Activated T-helper 2 cell treated with anti-CD3 and anti-CD28 coated beads, Interferon-gamma antibody, Interleukin-2, Interleukin-4, amounts not matched to agents 10 μg/mL and 5 μg/mL and 100 μg/mL, durations not matched to agents 14 hours and 24 hours and 36 hours (primary cell): ENCODE measurements at regions of chrX and their contacts with region 1.

Region 1: DNA sequence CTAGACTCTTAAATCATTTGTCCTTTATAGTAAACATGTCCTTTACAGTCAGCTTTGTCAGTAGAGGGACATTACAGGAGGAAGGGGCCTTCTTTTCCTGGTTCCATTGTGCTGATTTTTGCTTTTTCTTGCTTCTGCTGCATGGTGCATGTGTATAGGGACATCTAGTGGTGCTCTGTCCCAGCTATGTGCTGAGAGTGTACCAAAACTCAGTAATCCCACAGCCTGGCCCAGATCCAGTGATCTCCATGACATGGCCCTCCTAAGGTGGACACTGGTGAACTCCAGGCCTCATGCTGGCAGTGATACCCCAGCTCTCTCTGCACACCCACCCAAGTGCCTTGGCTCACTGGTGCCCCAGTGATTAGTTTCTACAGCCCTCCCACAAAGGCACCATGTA is 45.2 kb downstream of the MAGEB17 start:
- DNase-seq: no peak
- H3K4me3 Mint-ChIP-seq: no peak overlapping the region
- H3K27ac Mint-ChIP-seq: no peak overlapping the region
- H3K4me1 Mint-ChIP-seq: no peaks in the 10 kb centered on the region
- H3K27me3 Mint-ChIP-seq: no peaks in the 10 kb centered on the region

Region 2: DNA sequence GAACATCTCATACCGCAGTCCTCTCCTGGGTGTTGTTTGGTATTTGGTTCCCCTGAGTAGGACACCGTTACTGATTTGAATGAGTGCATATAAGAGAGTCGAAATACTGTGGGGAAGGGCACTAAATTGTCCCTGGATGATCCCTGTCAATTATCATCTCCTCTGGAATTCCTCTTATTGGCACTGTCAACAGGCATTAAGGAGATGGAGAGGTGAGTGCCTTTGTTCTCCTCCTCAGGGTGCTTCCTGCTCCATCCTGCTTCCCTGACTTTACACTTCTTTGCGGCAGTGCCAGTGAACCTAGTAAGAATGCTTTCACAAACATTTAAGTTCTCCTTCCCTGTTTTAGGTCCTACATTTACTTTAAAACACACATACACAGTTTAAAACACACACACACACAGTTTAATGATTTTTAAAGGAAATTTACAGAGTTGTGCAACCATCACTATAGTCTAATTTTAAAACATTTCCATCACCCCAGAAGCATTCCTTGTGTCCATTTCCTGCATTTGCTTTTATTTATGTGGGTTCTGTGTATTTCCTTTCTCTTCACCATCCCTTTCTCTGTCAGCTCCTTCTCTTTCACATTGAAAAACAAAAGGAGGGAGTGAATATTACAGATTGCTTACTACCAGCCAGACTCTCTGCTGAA is 443.0 kb before region 1 on chrX:
- intact Hi-C with region 1: loop called (anchors 5 kb)
- DNase-seq: no peak
- H3K4me3 Mint-ChIP-seq: no peak overlapping the region
- H3K27ac Mint-ChIP-seq: no peak overlapping the region
- H3K4me1 Mint-ChIP-seq: peaks cover 8% of the 10 kb centered on the region
- H3K27me3 Mint-ChIP-seq: no peaks in the 10 kb centered on the region

Region 3: DNA sequence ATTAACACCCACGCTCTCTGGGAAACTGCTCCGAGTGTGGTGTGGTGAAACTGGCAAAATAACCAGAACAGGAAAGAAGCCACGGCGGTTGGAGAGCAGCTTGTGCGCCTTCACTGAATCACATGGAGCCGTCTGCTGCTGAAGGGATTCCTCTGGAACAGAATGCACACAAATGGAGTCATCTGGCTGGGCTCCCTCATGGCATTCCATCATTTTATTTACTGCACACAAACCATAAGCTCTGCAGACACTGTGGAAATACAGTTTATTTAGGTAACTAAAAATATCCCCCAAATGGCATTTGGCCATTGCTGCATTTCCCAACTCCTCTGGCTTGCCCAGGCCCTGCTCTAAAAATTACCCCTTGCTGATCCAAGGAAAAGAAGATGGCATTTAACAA is 250.5 kb after region 1 on chrX:
- intact Hi-C with region 1: no loop called
- DNase-seq: no peak
- H3K4me3 Mint-ChIP-seq: no peak overlapping the region
- H3K27ac Mint-ChIP-seq: no peak overlapping the region
- H3K4me1 Mint-ChIP-seq: no peaks in the 10 kb centered on the region
- H3K27me3 Mint-ChIP-seq: peaks cover 1% of the 10 kb centered on the region